H1 (cell line): ENCODE measurements at regions of chr11 and their contacts with region 1.

Region 1: DNA sequence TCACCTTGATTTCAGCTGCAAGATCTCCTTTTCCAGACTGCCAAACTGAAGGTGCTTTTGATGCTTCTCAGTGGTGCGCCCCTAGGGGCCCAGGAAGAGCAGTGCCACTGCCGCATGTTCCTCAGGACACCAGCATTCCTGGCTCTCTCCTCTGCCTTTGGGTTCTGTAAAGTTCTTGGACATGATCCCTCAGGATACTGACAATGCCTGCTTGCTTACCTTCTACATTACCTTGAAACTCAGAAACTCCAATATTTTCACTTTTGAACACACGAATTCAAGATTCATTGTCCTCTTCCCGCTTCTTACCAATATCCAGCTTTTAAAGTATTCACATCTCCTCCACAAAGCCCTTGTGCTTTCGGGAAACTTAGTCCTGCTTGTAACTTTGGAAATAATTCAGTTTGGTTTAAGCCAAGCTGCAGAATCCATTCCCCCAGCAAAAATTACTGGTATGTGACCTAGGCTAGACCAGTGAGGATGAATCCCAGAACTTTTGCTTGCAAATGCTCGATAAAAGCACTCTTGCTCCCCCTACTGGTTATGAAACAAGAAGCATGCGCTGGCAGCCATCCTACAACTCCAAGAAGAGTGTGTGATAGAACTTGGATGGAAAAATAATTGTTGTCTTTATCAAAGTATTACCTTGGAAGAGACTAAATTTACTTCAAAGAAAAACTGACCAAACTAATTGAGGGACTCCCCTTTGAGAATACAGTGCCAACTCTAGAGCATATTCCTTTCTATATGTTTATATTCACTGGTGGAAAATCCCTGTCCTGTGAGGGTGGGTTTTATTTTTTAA is 16.5 kb upstream of the OR5B21 start:
- DNase-seq: peak in 1 of 2 experiments; percentile 76
- H3K4me3 ChIP-seq: peak overlapping the region in 1 of 4 experiments; percentile 45; a peak in 2 of 8 replicates
- H3K27ac ChIP-seq: no peak overlapping the region
- H3K4me1 ChIP-seq: peaks cover 0 to 3% (median 0%) of the 10 kb centered on the region in 4 experiments; a peak in 2 of 7 replicates
- H3K27me3 ChIP-seq: no peaks in the 10 kb centered on the region
- CTCF ChIP-seq: peak; percentile 84 to 96 (median 90)
- EP300 ChIP-seq: no peak
- POLR2A ChIP-seq: no peak
- RAD21 ChIP-seq: peak; percentile 70 to 80

Region 2: GRCh38 chr11:58406774-58407173 is 117.7 kb before region 1 on chr11 and contains the start of gene OR5B3:
- CTCF ChIA-PET with region 1: no interaction called
- POLR2A ChIA-PET with region 1: no interaction called
- DNase-seq: no peak
- H3K4me3 ChIP-seq: no peak within 1 kb of the TSS
- H3K27ac ChIP-seq: no peak within 1 kb of the TSS
- H3K4me1 ChIP-seq: no peaks in the 10 kb centered on the region
- H3K27me3 ChIP-seq: no peaks in the 10 kb centered on the region
- CTCF ChIP-seq: no peak
- EP300 ChIP-seq: no peak
- POLR2A ChIP-seq: no peak
- RAD21 ChIP-seq: no peak
- total RNA-seq, gene OR5B3: not detected in 2 replicates

Region 3: DNA sequence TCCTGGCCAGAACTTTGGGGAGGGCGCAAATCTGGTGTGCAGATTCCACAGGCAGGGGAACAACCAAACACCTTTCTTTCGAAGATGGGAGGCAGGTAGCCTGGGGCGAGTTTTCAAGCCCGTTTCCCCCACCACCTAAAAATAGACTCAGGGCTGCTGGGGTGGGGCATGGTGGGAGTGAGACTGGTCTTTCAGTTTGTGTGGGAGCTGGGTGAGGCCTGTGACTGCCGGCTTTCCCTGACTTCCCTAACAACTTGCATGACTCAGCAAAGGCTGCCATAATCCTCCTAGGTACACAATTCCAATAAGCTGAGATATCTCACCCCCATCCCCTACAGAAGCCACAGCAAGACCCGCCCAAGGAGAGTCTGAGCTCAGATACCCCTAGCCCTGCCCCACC is 78.1 kb before region 1 on chr11:
- CTCF ChIA-PET with region 1: no interaction called
- POLR2A ChIA-PET with region 1: no interaction called
- DNase-seq: no peak
- H3K4me3 ChIP-seq: no peak overlapping the region
- H3K27ac ChIP-seq: no peak overlapping the region
- H3K4me1 ChIP-seq: no peaks in the 10 kb centered on the region
- H3K27me3 ChIP-seq: no peaks in the 10 kb centered on the region
- CTCF ChIP-seq: no peak
- EP300 ChIP-seq: no peak
- POLR2A ChIP-seq: no peak
- RAD21 ChIP-seq: no peak

Region 4: GRCh38 chr11:58513747-58514367 is 10.6 kb before region 1 on chr11:
- CTCF ChIA-PET with region 1: interaction called, 27 read pairs
- POLR2A ChIA-PET with region 1: no interaction called
- DNase-seq: peak; percentile 54 to 74
- H3K4me3 ChIP-seq: no peak overlapping the region
- H3K27ac ChIP-seq: no peak overlapping the region
- H3K4me1 ChIP-seq: no peaks in the 10 kb centered on the region
- H3K27me3 ChIP-seq: no peaks in the 10 kb centered on the region
- CTCF ChIP-seq: peak; percentile 40 to 77 (median 76)
- EP300 ChIP-seq: no peak
- POLR2A ChIP-seq: no peak
- RAD21 ChIP-seq: peak; percentile 96 to 97

Region 5: DNA sequence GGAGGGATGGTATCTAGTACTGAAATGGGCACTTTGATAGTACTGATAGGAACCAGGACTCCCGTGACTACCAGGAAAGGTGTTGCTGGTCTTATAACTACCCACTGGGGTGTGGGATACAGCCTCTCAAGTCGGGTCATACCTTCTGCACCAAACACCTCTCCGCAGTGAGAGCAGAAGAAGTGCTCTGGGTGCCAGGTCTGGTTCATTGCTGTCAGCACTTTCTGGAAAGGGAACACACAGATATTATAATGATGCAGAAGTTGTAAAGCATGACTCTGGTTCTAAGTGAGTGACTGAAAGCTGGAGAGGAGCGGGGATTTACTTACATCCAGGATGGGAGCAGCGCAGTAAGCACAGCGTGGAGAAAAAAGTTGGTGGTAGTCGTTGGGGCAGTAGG is 25.2 kb after region 1 on chr11:
- CTCF ChIA-PET with region 1: interaction called, 16 read pairs
- POLR2A ChIA-PET with region 1: no interaction called
- DNase-seq: no peak
- H3K4me3 ChIP-seq: no peak overlapping the region
- H3K27ac ChIP-seq: no peak overlapping the region
- H3K4me1 ChIP-seq: no peaks in the 10 kb centered on the region
- H3K27me3 ChIP-seq: no peaks in the 10 kb centered on the region
- CTCF ChIP-seq: no peak
- EP300 ChIP-seq: no peak
- POLR2A ChIP-seq: no peak
- RAD21 ChIP-seq: no peak

Region 6: GRCh38 chr11:58675334-58676155 is 151.1 kb after region 1 on chr11:
- CTCF ChIA-PET with region 1: no interaction called
- POLR2A ChIA-PET with region 1: no interaction called
- DNase-seq: peak; percentile 36 to 87
- H3K4me3 ChIP-seq: no peak overlapping the region
- H3K27ac ChIP-seq: no peak overlapping the region
- H3K4me1 ChIP-seq: no peaks in the 10 kb centered on the region
- H3K27me3 ChIP-seq: no peaks in the 10 kb centered on the region
- CTCF ChIP-seq: peak; percentile 83 to 98 (median 95)
- EP300 ChIP-seq: no peak
- POLR2A ChIP-seq: no peak
- RAD21 ChIP-seq: peak; percentile 72 to 73